Posterior vena cava (tissue), 2 donors: ENCODE measurements at regions of chr20 and their contacts with region 1.

Region 1: DNA sequence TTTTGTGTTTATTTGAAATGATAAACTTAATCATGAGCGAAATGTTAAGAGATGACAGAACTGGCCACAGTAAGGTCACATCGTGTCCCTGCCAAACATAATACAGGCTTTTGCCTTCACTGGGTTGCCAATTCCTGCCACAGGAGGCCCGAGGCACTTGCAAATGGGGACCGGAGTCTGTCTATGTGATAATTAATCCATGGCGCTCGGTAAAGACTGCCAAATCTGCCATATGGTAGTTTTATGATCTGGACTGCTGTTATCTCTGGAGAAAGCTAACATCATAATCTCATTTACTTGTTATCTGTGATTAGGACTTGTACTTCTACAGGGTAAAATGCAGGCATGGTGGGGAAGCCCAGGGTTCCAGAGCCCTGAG is 170.5 kb upstream of the TSHZ2 start:
- DNase-seq: no peak

Region 2: DNA sequence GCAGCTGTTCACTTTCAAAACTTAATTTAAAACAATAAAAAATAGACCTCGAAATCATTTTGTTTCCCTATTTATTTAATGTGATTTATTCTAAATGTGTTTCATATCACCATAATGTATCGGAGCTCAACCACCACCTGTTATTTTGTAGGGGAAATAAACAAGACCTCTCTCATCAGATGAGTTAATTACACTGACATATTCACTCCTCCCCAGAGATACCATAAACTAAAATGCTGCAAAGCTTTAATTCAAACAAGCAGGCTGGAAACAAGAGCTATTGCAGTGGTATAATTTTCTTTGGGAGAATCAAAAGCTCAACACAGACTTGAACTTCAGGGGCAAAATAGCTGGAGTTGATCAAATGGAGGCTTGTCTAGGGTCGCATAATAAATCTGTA is 133.0 kb before region 1 on chr20:
- intact Hi-C with region 1: no loop called
- DNase-seq: no peak

Region 3: GRCh38 chr20:52824494-52825216 is 23.0 kb after region 1 on chr20:
- intact Hi-C with region 1: no loop called
- DNase-seq: no peak

Region 4: GRCh38 chr20:52880997-52881396 is 79.4 kb after region 1 on chr20:
- intact Hi-C with region 1: loop called in 1 of 2 experiments (anchors 2 kb)
- DNase-seq: no peak

Region 5: DNA sequence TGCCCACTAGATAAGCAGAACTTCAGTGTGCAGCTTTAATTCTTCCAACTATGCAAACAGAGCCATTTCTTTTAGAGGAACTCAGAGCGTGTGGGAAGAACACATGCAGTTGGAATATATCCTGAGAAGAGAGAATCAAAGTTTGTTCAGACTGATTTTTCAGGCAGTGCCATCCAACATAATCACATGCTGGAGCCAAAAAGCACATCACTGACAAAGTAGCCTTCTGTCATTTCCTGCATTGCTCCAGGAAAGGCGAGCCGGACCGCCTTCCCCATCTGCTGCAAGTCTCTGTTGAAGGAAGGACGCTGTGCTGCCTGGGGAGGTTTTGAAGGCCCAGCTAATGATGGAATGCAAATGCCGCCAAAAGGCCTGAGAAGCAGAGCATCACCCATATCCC is 1772.2 kb after region 1 on chr20:
- intact Hi-C with region 1: loop called in 1 of 2 experiments (anchors 10 kb)
- DNase-seq: no peak